K562 (cell line): ENCODE measurements at regions of chr16 and their contacts with region 1.

Region 1: GRCh38 chr16:2155091-2156021 is at the start of gene TRAF7:
- DNase-seq: peak; percentile 92 to 100 (median 96)
- ATAC-seq: peak; percentile 86
- H3K4me3 ChIP-seq: peak within 1 kb of the TSS; percentile 55
- H3K27ac ChIP-seq: peak within 1 kb of the TSS; percentile 82
- H3K4me1 ChIP-seq: peaks cover 22 to 70% of the 10 kb centered on the region in 2 experiments; a peak in 4 of 5 replicates
- H3K27me3 ChIP-seq: no peaks in the 10 kb centered on the region
- CTCF ChIP-seq: no peak
- EP300 ChIP-seq: 0 out of 2 replicates have a peak, but pooled peaks have one; percentile 5
- POLR2A ChIP-seq: peak; percentile 100
- RAD21 ChIP-seq: 0 out of 4 replicates have a peak, but pooled peaks of 1 of the 2 experiments have one; percentile 13
- polyA plus RNA-seq, gene TRAF7: 1.1 to 1.5 TPM

Region 2: GRCh38 chr16:959232-960040 is 1195.9 kb before region 1 on chr16:
- CTCF ChIA-PET with region 1: no interaction called
- POLR2A ChIA-PET with region 1: no interaction called
- in situ Hi-C with region 1: no loop called
- intact Hi-C with region 1: no loop called
- DNase-seq: no peak
- ATAC-seq: no peak
- H3K4me3 ChIP-seq: no peak overlapping the region
- H3K27ac ChIP-seq: no peak overlapping the region
- H3K4me1 ChIP-seq: peaks cover 0 to 9% of the 10 kb centered on the region in 2 experiments; a peak in 1 of 5 replicates
- H3K27me3 ChIP-seq: peaks cover 13 to 56% of the 10 kb centered on the region in 2 experiments
- CTCF ChIP-seq: no peak
- EP300 ChIP-seq: no peak
- POLR2A ChIP-seq: no peak
- RAD21 ChIP-seq: no peak

Region 3: GRCh38 chr16:1857433-1858097 is 297.8 kb before region 1 on chr16:
- CTCF ChIA-PET with region 1: no interaction called
- POLR2A ChIA-PET with region 1: no interaction called
- in situ Hi-C with region 1: no loop called
- intact Hi-C with region 1: no loop called
- DNase-seq: no peak
- ATAC-seq: no peak
- H3K4me3 ChIP-seq: no peak overlapping the region
- H3K27ac ChIP-seq: no peak overlapping the region
- H3K4me1 ChIP-seq: no peaks in the 10 kb centered on the region
- H3K27me3 ChIP-seq: no peaks in the 10 kb centered on the region
- CTCF ChIP-seq: no peak
- EP300 ChIP-seq: no peak
- POLR2A ChIP-seq: no peak
- RAD21 ChIP-seq: no peak

Region 4: DNA sequence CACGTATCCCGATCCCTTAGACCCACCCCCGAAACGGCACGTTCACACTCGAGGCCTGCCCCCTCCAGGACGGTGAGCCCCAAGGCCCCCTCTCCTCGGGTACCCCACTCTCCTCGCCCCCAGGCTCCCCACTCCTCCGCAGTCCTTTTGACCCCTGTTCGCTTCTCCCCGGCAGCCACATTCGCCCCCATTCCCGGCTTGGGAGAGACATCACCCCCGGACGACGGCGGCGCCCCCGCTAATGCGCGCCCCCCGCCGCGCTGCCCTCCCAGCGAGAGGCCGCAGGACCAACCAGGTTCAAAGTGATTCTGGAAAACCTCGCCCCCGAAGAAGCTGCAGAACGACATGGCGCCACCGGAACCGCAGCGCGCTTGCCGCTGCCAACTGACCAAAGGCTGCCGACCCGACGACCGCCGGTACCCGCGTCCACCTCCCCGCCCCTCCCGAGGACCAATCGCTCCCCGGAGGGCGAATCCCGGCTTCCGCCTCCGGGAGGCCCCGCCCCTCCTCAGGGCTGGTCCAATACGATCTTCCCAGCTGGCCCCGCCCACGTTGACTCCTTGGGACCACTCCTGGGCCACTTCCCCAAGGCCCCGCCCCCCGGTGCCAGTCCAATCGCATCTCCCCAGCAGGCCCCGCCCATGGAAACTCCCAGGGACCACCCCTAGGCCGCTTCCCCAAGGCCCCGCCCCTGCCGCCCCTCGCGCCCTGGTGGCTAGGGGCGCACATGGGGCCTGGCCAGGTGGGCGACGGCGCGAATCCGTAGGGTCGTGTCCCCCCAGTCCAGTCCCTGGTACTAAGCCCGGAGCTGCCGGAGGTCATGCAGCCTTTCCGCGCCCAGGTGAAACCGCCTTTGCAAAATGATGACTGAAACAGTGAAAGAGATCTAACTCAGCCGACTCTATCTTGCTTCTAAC is 212.3 kb before region 1 on chr16 and contains the start of gene MSRB1:
- CTCF ChIA-PET with region 1: no interaction called
- POLR2A ChIA-PET with region 1: interaction called, 16 read pairs
- in situ Hi-C with region 1: no loop called
- intact Hi-C with region 1: no loop called
- DNase-seq: peak; percentile 99 to 100 (median 100)
- ATAC-seq: peak; percentile 95
- H3K4me3 ChIP-seq: peak within 1 kb of the TSS; percentile 78
- H3K27ac ChIP-seq: peak within 1 kb of the TSS; percentile 51
- H3K4me1 ChIP-seq: peaks cover 29 to 76% of the 10 kb centered on the region in 2 experiments
- H3K27me3 ChIP-seq: no peaks in the 10 kb centered on the region
- CTCF ChIP-seq: no peak; a peak in 1 of 6 replicates
- EP300 ChIP-seq: no peak
- POLR2A ChIP-seq: peak; percentile 80
- RAD21 ChIP-seq: no peak
- polyA plus RNA-seq, gene MSRB1: 5.4 to 15.3 TPM

Region 5: GRCh38 chr16:1991948-1992703 is 163.2 kb before region 1 on chr16:
- CTCF ChIA-PET with region 1: no interaction called
- POLR2A ChIA-PET with region 1: interaction called, 16 read pairs
- in situ Hi-C with region 1: no loop called
- intact Hi-C with region 1: no loop called
- DNase-seq: peak; percentile 97 to 99 (median 97)
- ATAC-seq: peak; percentile 82
- H3K4me3 ChIP-seq: peak overlapping the region; percentile 64
- H3K27ac ChIP-seq: peak overlapping the region; percentile 94
- H3K4me1 ChIP-seq: peaks cover 29 to 56% of the 10 kb centered on the region in 2 experiments
- H3K27me3 ChIP-seq: no peaks in the 10 kb centered on the region
- CTCF ChIP-seq: no peak
- EP300 ChIP-seq: no peak
- POLR2A ChIP-seq: peak; percentile 73
- RAD21 ChIP-seq: no peak

Region 6: DNA sequence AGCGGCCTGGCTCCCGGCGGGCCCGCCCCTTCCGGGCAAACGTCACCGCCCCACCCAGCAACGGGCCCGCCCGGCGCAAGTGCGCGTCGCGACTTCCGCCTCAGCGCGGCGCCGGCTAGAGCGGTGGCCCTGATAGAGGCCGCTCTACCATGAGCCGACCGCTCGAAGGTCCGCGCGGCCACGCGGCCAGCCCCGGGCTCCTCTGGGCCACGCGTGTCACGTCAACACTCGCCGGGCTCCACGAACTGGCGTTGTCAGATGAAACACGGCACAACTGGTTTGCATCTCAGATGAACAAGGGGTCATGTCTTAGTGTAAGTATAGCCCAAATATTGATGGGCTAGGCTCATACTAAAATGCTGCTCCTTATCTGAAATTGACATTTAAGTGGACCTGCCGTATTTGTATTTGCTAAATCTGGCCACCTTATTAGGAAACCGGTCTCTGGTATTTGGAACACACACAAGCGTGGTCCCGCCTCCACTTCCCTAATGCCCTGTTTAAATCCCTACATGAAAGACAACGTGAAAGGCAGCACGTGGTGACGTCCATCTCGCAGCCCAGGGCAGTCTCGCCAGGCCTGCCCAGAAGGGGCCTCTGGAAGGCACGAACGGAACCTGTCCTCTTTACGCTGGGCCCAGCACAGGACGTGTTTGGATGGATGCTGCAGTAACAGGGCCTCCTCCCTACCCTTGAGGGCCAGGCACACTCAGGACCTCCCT is 145.4 kb before region 1 on chr16 and contains the start of gene ZNF598:
- CTCF ChIA-PET with region 1: no interaction called
- POLR2A ChIA-PET with region 1: interaction called, 12 read pairs
- in situ Hi-C with region 1: no loop called
- intact Hi-C with region 1: no loop called
- DNase-seq: peak; percentile 90 to 95 (median 90)
- ATAC-seq: peak; percentile 91
- H3K4me3 ChIP-seq: peak within 1 kb of the TSS; percentile 99
- H3K27ac ChIP-seq: peak within 1 kb of the TSS; percentile 91
- H3K4me1 ChIP-seq: peaks cover 20 to 60% of the 10 kb centered on the region in 2 experiments
- H3K27me3 ChIP-seq: no peaks in the 10 kb centered on the region
- CTCF ChIP-seq: no peak; a peak in 1 of 6 replicates
- EP300 ChIP-seq: peak; percentile 27; the same call in 1 of the 2 replicates
- POLR2A ChIP-seq: peak; percentile 96
- RAD21 ChIP-seq: no peak
- polyA plus RNA-seq, gene ZNF598: 0.11 to 0.39 TPM

Region 7: GRCh38 chr16:2047330-2048115 is 107.8 kb before region 1 on chr16 and contains the starts of genes NTHL1 and TSC2:
- CTCF ChIA-PET with region 1: no interaction called
- POLR2A ChIA-PET with region 1: interaction called, 24 read pairs
- in situ Hi-C with region 1: no loop called
- intact Hi-C with region 1: no loop called
- DNase-seq: peak; percentile 92 to 99 (median 92)
- ATAC-seq: peak; percentile 97
- H3K4me3 ChIP-seq: peak within 1 kb of the TSS; percentile 99
- H3K27ac ChIP-seq: peak within 1 kb of the TSS; percentile 43; the same call in 1 of the 3 replicates
- H3K4me1 ChIP-seq: peaks cover 11 to 54% of the 10 kb centered on the region in 2 experiments; a peak in 4 of 5 replicates
- H3K27me3 ChIP-seq: no peaks in the 10 kb centered on the region
- CTCF ChIP-seq: peak; percentile 34 to 46 (median 43); a peak in 3 of 6 replicates
- EP300 ChIP-seq: no peak
- POLR2A ChIP-seq: peak; percentile 67; the same call in 1 of the 2 replicates
- RAD21 ChIP-seq: no peak; a peak in 2 of 4 replicates
- polyA plus RNA-seq, gene NTHL1: 1.1 to 4.7 TPM
- polyA plus RNA-seq, gene TSC2: 1.3 to 2.3 TPM

Region 8: GRCh38 chr16:2194852-2195321 is 39.5 kb after region 1 on chr16:
- CTCF ChIA-PET with region 1: no interaction called
- POLR2A ChIA-PET with region 1: interaction called, 17 read pairs
- in situ Hi-C with region 1: no loop called
- intact Hi-C with region 1: no loop called
- DNase-seq: peak in 3 of 4 experiments; percentile 45 to 83 (median 73)
- ATAC-seq: peak; percentile 90
- H3K4me3 ChIP-seq: no peak overlapping the region
- H3K27ac ChIP-seq: no peak overlapping the region
- H3K4me1 ChIP-seq: peaks cover 3 to 65% of the 10 kb centered on the region in 2 experiments; a peak in 4 of 5 replicates
- H3K27me3 ChIP-seq: peaks cover 0 to 5% of the 10 kb centered on the region in 2 experiments; a peak in 2 of 5 replicates
- CTCF ChIP-seq: peak; percentile 67 to 84 (median 75)
- EP300 ChIP-seq: no peak
- POLR2A ChIP-seq: no peak
- RAD21 ChIP-seq: peak; percentile 67 to 86

Region 9: DNA sequence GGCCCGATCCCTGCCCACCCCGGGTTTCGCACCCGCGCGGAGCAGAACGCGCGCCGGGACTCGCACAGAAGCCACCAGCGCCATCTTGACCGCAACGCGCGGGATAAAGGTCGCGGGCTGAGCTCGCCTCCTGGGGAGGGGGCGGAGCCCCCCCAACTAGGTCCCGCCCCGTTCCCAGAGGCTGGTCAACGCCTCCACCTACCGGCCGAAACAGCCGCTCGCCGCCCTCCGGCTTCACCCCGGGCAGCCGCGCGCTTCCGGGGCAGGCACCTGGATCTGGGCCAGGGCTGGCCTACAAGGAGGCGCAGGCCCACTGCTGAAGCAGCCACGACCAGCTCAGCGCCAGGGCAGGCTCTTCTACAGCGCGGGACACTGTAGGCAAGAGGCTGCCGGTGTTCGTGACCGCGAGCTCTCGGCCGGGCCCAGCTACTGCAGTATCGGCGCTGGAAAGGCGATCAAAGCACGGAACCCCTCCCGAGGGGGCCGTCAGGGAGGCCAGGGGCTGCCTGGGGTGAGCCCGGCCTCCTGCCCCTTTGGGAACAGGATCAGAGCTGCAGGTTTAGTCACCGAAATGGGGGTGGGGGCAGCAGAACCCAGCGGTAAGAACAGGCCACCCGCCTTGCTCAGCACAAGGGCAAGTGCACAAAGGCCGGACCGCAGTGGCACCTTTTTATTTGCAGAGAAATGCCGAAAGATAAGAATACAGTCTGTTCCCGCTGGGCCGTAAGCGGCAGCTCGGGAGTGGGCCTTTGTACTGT is 96.3 kb after region 1 on chr16 and contains the start of gene ECI1:
- CTCF ChIA-PET with region 1: no interaction called
- POLR2A ChIA-PET with region 1: interaction called, 28 read pairs
- in situ Hi-C with region 1: no loop called
- intact Hi-C with region 1: loop called (anchors 2 kb)
- DNase-seq: peak; percentile 97 to 99 (median 97)
- ATAC-seq: peak; percentile 93
- H3K4me3 ChIP-seq: peak within 1 kb of the TSS; percentile 94
- H3K27ac ChIP-seq: peak within 1 kb of the TSS; percentile 97
- H3K4me1 ChIP-seq: peaks cover 8 to 25% of the 10 kb centered on the region in 2 experiments
- H3K27me3 ChIP-seq: no peaks in the 10 kb centered on the region
- CTCF ChIP-seq: peak; percentile 80 to 88 (median 87)
- EP300 ChIP-seq: peak; percentile 34; the same call in 1 of the 2 replicates
- POLR2A ChIP-seq: peak; percentile 87
- RAD21 ChIP-seq: peak; percentile 82 to 85
- polyA plus RNA-seq, gene ECI1: 4.7 to 7.6 TPM